ENCODE measurements at regions of chr13 and their contacts with region 1.

Region 1: GRCh38 chr13:58960888-58961287 is 1202.8 kb downstream of the DIAPH3 start:
- DNase-seq: no peak
- ATAC-seq: peak; percentile 52
- H3K4me3 ChIP-seq: no peak overlapping the region
- H3K27ac ChIP-seq: no peak overlapping the region
- H3K4me1 ChIP-seq: no peaks in the 10 kb centered on the region
- H3K27me3 ChIP-seq: no peaks in the 10 kb centered on the region
- CTCF ChIP-seq: peak in 2 of 3 experiments; percentile 16 to 40; a peak in 2 of 6 replicates
- EP300 ChIP-seq: no peak
- POLR2A ChIP-seq: no peak
- RAD21 ChIP-seq: peak; percentile 49

Region 2: GRCh38 chr13:57629821-57630235 is 1331.1 kb before region 1 on chr13:
- CTCF ChIA-PET with region 1: interaction called, 42 read pairs
- POLR2A ChIA-PET with region 1: no interaction called
- RAD21 ChIA-PET with region 1: interaction called, 27 read pairs
- SMC1A ChIA-PET with region 1: interaction called, 20 read pairs
- in situ Hi-C with region 1: loop called (anchors 25 kb)
- intact Hi-C with region 1: loop called (anchors 2 kb)
- DNase-seq: no peak
- ATAC-seq: peak; percentile 60
- H3K4me3 ChIP-seq: no peak overlapping the region
- H3K27ac ChIP-seq: no peak overlapping the region
- H3K4me1 ChIP-seq: no peaks in the 10 kb centered on the region
- H3K27me3 ChIP-seq: peaks cover 0 to 8% of the 10 kb centered on the region in 2 experiments; a peak in 2 of 4 replicates
- CTCF ChIP-seq: no peak
- EP300 ChIP-seq: no peak
- POLR2A ChIP-seq: no peak
- RAD21 ChIP-seq: no peak

Region 3: GRCh38 chr13:57925250-57925649 is 1035.6 kb before region 1 on chr13:
- CTCF ChIA-PET with region 1: interaction called, 3 read pairs
- POLR2A ChIA-PET with region 1: no interaction called
- RAD21 ChIA-PET with region 1: interaction called, 4 read pairs
- SMC1A ChIA-PET with region 1: interaction called, 5 read pairs
- in situ Hi-C with region 1: no loop called
- intact Hi-C with region 1: loop called (anchors 5 kb)
- DNase-seq: no peak
- ATAC-seq: no peak
- H3K4me3 ChIP-seq: no peak overlapping the region
- H3K27ac ChIP-seq: no peak overlapping the region
- H3K4me1 ChIP-seq: no peaks in the 10 kb centered on the region
- H3K27me3 ChIP-seq: no peaks in the 10 kb centered on the region
- CTCF ChIP-seq: peak in 1 of 3 experiments; percentile 28; a peak in 1 of 6 replicates
- EP300 ChIP-seq: no peak
- POLR2A ChIP-seq: no peak
- RAD21 ChIP-seq: no peak

Region 4: DNA sequence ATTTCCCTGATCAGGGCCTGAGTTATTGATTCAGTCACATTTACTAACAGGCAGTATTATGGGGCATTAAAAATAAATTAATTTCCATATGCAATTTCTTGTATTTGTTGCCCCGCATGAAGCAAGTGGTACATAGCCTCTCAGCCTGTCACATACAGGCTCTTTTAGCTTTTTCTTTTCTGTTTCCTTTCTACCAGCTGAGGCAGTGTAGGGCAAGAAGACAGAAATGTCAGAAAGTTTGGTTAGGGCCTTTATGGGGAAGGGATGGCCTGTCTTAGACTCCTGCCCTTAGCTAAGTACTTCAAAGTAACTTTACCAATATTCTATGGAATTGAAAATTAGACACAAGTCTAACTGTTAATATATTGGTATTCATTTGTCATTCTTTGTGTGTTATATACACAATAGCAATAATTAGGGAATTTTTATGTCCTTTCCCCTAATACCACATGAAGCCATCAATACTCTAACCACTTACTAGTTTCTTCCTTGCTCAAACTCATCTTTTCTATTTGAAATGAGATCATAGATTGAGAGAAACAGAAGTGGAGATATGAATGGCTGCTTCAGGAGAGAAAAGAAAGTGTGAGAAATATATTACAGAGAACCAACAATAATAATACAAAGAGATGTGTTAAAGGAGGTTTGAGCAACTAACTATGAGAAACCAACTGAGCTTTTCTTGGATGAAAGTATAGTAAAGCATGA is 659.8 kb before region 1 on chr13:
- CTCF ChIA-PET with region 1: no interaction called
- POLR2A ChIA-PET with region 1: no interaction called
- RAD21 ChIA-PET with region 1: interaction called, 3 read pairs
- SMC1A ChIA-PET with region 1: interaction called, 4 read pairs
- in situ Hi-C with region 1: no loop called
- intact Hi-C with region 1: loop called (anchors 10 kb)
- DNase-seq: no peak
- ATAC-seq: peak; percentile 72
- H3K4me3 ChIP-seq: no peak overlapping the region
- H3K27ac ChIP-seq: no peak overlapping the region
- H3K4me1 ChIP-seq: no peaks in the 10 kb centered on the region
- H3K27me3 ChIP-seq: no peaks in the 10 kb centered on the region
- CTCF ChIP-seq: no peak
- EP300 ChIP-seq: no peak
- POLR2A ChIP-seq: no peak
- RAD21 ChIP-seq: no peak

Region 5: DNA sequence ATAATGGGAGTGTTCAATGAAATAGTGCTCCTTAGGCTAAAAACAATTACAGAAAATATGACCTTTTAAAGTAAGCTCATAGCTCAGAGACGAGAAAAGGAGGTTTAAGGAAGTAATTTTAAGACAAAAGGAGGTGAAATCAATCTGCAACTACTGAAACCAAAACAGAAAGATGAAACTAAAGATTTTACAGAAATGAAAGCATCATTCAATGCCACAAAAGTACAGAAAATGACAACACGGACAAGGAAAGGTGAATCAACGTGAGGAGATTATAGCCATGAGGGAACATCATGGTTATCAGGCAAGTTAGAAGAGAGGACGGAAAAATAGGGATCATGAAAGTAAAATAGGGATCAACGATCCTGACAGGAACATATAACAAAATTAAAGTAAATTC is 584.1 kb before region 1 on chr13:
- CTCF ChIA-PET with region 1: no interaction called
- POLR2A ChIA-PET with region 1: no interaction called
- RAD21 ChIA-PET with region 1: interaction called, 5 read pairs
- SMC1A ChIA-PET with region 1: interaction called, 5 read pairs
- in situ Hi-C with region 1: no loop called
- intact Hi-C with region 1: loop called (anchors 2 kb)
- DNase-seq: peak; percentile 7
- ATAC-seq: peak; percentile 82
- H3K4me3 ChIP-seq: no peak overlapping the region
- H3K27ac ChIP-seq: no peak overlapping the region
- H3K4me1 ChIP-seq: no peaks in the 10 kb centered on the region
- H3K27me3 ChIP-seq: no peaks in the 10 kb centered on the region
- CTCF ChIP-seq: no peak
- EP300 ChIP-seq: peak in 1 of 2 experiments; percentile 79; a peak in 2 of 4 replicates
- POLR2A ChIP-seq: no peak
- RAD21 ChIP-seq: no peak

Region 6: DNA sequence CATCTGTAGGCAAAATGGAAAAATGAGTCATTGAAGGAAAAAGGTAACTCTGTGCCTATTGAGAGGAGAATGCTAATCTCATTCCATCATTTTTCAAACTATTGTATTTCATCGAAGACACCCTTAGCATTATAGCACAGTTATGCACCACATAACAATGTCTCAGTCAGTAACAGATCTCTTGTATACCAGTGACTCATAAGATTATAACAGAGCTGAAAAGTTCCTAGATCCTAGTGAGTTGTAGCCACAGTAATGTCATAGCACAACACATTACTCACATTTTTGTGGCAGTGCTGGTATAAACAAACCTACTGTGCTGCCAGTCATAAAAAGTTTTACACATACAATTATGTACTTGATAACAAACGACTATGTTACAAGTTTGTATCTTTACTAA is 125.3 kb after region 1 on chr13:
- CTCF ChIA-PET with region 1: no interaction called
- POLR2A ChIA-PET with region 1: no interaction called
- RAD21 ChIA-PET with region 1: no interaction called
- SMC1A ChIA-PET with region 1: no interaction called
- in situ Hi-C with region 1: no loop called
- intact Hi-C with region 1: no loop called
- DNase-seq: no peak
- ATAC-seq: no peak
- H3K4me3 ChIP-seq: no peak overlapping the region
- H3K27ac ChIP-seq: no peak overlapping the region
- H3K4me1 ChIP-seq: no peaks in the 10 kb centered on the region
- H3K27me3 ChIP-seq: no peaks in the 10 kb centered on the region
- CTCF ChIP-seq: no peak
- EP300 ChIP-seq: no peak
- POLR2A ChIP-seq: no peak
- RAD21 ChIP-seq: no peak

Region 7: GRCh38 chr13:59425211-59425721 is 464.4 kb after region 1 on chr13:
- CTCF ChIA-PET with region 1: no interaction called
- POLR2A ChIA-PET with region 1: no interaction called
- RAD21 ChIA-PET with region 1: no interaction called
- SMC1A ChIA-PET with region 1: no interaction called
- in situ Hi-C with region 1: no loop called
- intact Hi-C with region 1: no loop called
- DNase-seq: no peak
- ATAC-seq: no peak
- H3K4me3 ChIP-seq: no peak overlapping the region
- H3K27ac ChIP-seq: no peak overlapping the region
- H3K4me1 ChIP-seq: no peaks in the 10 kb centered on the region
- H3K27me3 ChIP-seq: no peaks in the 10 kb centered on the region
- CTCF ChIP-seq: no peak
- EP300 ChIP-seq: no peak
- POLR2A ChIP-seq: no peak
- RAD21 ChIP-seq: no peak